Head of caudate nucleus (tissue), 42 donors: ENCODE measurements at regions of chr12 and their contacts with region 1.

Region 1: GRCh38 chr12:6533923-6534694 is at the start of gene GAPDH:
- DNase-seq: peak; percentile 93 to 99 (median 98)

Region 2: GRCh38 chr12:6423267-6424007 is 110.7 kb before region 1 on chr12:
- intact Hi-C with region 1: loop called (anchors 5 kb)
- DNase-seq: peak; percentile 56 to 92 (median 83)

Region 3: GRCh38 chr12:6470375-6471163 is 63.5 kb before region 1 on chr12 and contains the start of gene VAMP1:
- intact Hi-C with region 1: loop called (anchors 2 kb)
- DNase-seq: peak; percentile 99 to 100 (median 100)

Region 4: GRCh38 chr12:6493497-6494257 is 40.4 kb before region 1 on chr12 and contains the start of gene NCAPD2:
- intact Hi-C with region 1: loop called (anchors 2 kb)
- DNase-seq: peak; percentile 90 to 99 (median 97)

Region 5: GRCh38 chr12:7555752-7556151 is 1021.6 kb after region 1 on chr12:
- intact Hi-C with region 1: no loop called
- DNase-seq: no peak